HEK293 (cell line): ENCODE measurements at regions of chr14 and their contacts with region 1.

Region 1: DNA sequence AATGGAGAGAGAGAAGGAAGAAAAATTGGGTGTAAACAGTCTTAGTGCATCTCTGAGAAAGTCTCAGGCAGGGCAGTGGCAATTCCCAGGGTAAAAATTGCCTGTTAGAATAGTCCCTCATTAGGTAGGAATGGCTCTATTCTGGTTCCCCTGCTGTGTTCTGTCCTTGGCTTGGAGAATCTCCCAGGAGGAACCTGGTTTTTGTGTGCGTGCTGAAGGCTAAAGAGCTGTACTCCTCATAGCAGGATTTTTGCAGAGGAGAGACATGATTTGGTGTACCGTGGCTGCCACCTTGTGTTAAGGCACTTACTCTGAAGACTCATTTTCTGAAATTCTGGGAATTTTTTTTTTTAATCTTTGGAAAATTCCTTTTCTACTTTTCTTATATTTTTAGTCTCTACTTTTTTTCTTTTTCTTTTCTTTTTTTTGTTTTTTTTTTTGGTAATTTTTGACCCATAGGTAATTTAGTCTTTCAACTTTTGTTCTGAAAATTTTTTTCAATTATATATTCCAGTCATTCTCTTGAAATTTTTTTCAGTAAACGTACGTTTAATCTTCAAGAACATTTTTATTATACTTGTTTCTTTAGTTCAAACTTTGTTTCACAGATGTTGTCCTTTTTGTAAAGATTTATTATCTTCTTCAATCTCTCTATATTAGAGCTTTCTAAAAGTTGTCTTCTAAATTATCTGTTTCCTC is 63.8 kb downstream of the FBXO33 start:
- H3K4me3 ChIP-seq: no peak overlapping the region
- H3K27ac ChIP-seq: no peak overlapping the region
- H3K4me1 ChIP-seq: no peaks in the 10 kb centered on the region
- CTCF ChIP-seq: peak; percentile 49; the same call in 1 of the 2 replicates

Region 2: DNA sequence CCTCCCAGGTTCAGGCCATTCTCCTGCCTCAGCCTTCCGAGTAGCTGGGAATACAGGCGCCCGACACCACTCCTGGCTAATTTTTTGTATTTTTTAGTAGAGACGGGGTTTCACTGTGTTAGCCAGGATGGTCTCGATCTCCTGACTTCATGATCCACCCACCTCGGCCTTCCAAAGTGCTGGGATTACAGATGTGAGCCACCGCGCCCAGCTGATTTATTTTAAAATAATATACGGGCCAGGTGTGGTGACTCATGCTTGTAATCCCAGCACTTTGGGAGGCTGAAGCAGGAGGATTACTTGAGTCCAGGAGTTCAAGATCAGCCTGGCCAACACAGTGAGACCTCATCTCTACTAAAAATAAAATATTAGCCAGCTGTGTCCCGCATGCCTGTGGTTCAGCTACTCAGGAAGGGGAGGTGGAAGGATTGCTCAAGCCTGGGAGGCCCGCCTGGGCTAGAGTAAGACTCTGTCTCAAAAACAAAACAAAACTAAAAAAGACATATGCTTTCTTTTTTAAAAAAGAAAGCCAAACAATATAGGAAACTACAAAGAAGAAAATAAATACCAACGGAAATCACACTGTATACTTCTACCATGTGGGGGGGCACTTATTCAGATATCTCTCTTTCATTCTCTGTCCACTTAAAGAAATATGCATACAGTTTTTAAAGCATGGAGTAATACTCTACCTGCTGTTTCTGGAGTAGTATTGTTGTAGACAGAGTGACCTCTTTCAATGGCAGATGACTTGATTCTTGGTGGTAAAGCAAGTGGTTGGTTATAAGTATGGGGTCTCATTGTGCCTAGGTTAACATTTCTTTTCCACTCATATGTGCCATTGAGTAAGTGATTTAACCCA is 135.6 kb before region 1 on chr14:
- CTCF ChIA-PET with region 1: interaction called, 21 read pairs
- POLR2A ChIA-PET with region 1: interaction called, 3 read pairs
- H3K4me3 ChIP-seq: no peak overlapping the region
- H3K27ac ChIP-seq: no peak overlapping the region
- H3K4me1 ChIP-seq: no peaks in the 10 kb centered on the region
- CTCF ChIP-seq: no peak